Body of pancreas (tissue), 4 donors: ENCODE measurements at regions of chr2 and their contacts with region 1.

Region 1: GRCh38 chr2:101419096-101419663 is 31.9 kb upstream of the CREG2 start:
- DNase-seq: peak; percentile 49 to 74 (median 64)
- ATAC-seq: peak; percentile 65
- H3K4me3 ChIP-seq: no peak overlapping the region
- H3K27ac ChIP-seq: no peak overlapping the region
- H3K4me1 ChIP-seq: no peaks in the 10 kb centered on the region
- H3K27me3 ChIP-seq: no peaks in the 10 kb centered on the region
- CTCF ChIP-seq: peak; percentile 50 to 69 (median 59)
- POLR2A ChIP-seq: no peak

Region 2: DNA sequence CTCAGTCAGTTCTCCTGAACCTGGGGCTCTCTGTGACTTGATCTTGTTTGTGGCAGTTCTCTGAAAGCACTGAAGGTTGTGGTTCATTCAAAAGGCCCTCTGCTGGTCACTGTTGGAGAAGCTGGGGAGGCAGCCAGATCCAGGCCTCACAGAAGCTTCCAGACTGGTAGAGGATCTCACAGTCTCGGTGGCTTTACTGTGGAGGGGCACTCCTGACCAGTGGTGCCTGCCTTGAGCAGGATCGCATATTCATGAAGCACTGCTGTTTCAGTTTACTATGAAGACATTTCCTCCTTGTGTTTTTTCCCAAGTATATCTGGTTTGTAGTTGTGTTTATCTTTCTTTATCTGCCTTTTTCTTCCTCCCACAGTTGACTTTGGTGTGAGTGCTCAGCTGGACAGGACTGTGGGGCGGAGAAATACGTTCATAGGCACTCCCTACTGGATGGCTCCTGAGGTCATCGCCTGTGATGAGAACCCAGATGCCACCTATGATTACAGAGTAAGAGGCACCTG is 412.2 kb after region 1 on chr2:
- intact Hi-C with region 1: loop called (anchors 10 kb)
- DNase-seq: peak; percentile 71 to 80 (median 76)
- ATAC-seq: peak; percentile 80
- H3K4me3 ChIP-seq: no peak overlapping the region
- H3K27ac ChIP-seq: peak overlapping the region; percentile 8 to 43 (median 30)
- H3K4me1 ChIP-seq: peaks cover 14% of the 10 kb centered on the region
- H3K27me3 ChIP-seq: no peaks in the 10 kb centered on the region
- CTCF ChIP-seq: peak; percentile 57 to 82 (median 68)
- POLR2A ChIP-seq: no peak